ENCODE measurements at regions of chr1 and their contacts with region 1.

Region 1: DNA sequence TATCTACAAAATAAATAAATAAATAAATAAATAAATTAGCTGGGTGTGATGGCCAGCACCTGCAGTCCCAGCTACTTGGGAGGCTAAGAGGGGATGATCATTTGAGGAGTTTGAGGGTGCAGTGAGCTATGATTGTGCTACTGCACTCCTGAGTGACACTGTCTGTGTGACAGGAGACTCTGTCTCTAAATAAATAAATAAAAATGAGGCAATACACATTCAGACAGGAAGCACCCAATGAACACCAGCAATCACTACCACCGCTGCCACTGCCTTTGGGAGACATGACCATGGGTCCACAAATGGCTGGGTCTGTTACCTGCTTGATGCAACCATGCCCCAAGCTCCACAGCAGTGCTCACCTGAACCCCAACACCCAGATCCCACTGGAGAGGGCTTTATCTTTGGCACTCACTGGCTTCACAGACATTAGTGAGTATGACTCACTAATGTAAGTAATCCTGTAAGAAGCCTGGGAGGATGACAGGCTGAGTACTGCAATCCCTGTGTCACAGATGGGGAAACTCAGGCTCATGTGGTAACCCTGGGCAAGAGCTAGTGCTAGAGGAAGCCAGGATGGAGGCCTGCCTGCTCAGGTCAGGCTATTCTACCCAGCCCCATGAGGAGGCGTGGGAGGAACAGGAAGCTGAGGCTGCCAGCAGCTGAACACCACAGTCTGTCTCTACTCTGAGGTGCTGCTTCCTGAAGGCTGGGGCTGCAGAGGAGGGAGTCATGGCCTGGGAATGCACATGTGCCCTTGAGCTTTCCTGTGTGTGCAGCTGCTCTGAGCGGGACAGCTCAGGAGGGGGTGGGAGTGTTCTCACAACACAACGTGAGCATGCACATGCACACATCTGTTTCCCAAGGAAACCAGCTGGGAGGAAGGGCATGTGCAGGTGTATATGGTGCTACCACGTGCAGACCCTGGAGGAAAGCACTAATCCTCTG is 43.0 kb downstream of the SLC9A1 start:
- DNase-seq: peak; percentile 83
- H3K4me3 ChIP-seq: no peak overlapping the region
- H3K27ac ChIP-seq: no peak overlapping the region
- H3K4me1 ChIP-seq: peaks cover 30% of the 10 kb centered on the region
- H3K27me3 ChIP-seq: no peaks in the 10 kb centered on the region
- CTCF ChIP-seq: no peak
- POLR2A ChIP-seq: no peak

Region 2: DNA sequence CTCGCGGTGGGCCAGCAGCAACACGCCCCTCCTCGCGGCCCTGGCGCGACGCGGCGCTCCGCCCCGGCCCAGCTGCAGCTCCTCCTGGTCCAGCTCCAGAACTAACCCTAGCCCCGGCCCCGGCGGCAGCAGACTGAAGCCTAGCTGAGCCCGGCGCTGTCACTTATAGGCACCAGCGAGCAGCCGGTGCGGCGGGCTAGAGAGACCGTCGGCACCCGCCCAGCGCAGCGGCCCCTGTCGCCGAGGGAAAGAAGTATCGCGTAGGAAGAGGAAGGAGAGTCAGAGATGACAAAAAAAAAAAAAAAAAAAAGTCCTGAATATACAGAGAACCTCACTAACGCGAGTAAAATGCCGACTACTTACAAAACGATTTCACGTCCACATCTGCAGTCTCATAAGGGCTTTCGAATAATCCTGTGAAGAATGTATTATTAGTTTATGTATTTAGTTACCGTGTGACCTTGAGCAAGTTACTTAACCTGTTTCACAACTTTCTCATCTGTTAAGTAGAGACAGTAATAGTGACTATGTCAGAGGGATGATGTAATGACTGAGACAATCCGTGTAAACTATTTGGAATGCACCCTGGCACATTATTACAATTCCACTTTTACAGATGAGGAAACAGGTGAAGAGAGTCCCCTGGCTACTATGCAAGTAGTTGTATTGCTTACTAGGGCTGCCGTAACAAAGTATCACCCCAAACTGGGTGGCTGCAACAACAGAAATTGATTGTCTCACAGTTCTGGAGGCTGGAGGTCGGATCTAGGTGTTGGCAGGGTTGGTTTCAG is 43.3 kb after region 1 on chr1 and contains the start of gene SLC9A1:
- intact Hi-C with region 1: loop called (anchors 5 kb)
- DNase-seq: peak; percentile 96
- H3K4me3 ChIP-seq: peak within 1 kb of the TSS; percentile 68 to 69
- H3K27ac ChIP-seq: peak within 1 kb of the TSS; percentile 81 to 84
- H3K4me1 ChIP-seq: peaks cover 23% of the 10 kb centered on the region
- H3K27me3 ChIP-seq: no peaks in the 10 kb centered on the region
- CTCF ChIP-seq: peak in 2 of 3 experiments; percentile 72 to 77
- POLR2A ChIP-seq: peak; percentile 83
- total RNA-seq, gene SLC9A1: 16.8 to 26.4 TPM

Region 3: GRCh38 chr1:27166351-27166802 is 54.5 kb after region 1 on chr1:
- intact Hi-C with region 1: no loop called
- DNase-seq: no peak
- H3K4me3 ChIP-seq: no peak overlapping the region
- H3K27ac ChIP-seq: no peak overlapping the region
- H3K4me1 ChIP-seq: no peaks in the 10 kb centered on the region
- H3K27me3 ChIP-seq: no peaks in the 10 kb centered on the region
- CTCF ChIP-seq: no peak
- POLR2A ChIP-seq: no peak

Region 4: GRCh38 chr1:27284425-27285273 is 172.7 kb after region 1 on chr1:
- intact Hi-C with region 1: loop called (anchors 5 kb)
- DNase-seq: peak; percentile 96
- H3K4me3 ChIP-seq: no peak overlapping the region
- H3K27ac ChIP-seq: no peak overlapping the region
- H3K4me1 ChIP-seq: no peaks in the 10 kb centered on the region
- H3K27me3 ChIP-seq: no peaks in the 10 kb centered on the region
- CTCF ChIP-seq: peak; percentile 76 to 90 (median 83)
- POLR2A ChIP-seq: no peak